MCF 10A (cell line): ENCODE measurements at regions of chr4 and their contacts with region 1.

Region 1: DNA sequence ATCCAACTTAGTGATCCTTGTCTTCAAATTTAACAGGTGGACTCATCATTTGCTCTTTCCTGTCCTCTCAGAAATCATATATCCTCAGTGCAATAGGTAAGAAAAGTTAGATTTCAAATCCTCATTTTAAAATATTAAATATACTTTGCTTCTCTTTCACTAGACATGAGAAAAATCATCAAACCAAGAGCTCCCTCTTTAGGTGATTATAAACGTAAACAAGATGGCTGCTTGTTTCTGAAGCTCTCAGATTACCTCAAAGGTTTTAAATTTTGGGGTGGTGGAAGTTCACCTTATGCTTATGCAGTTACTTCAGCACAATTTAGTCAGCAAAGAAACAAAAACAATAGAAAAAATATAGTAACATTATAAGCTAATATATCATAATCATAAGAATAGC is 27.3 kb downstream of the CSN3 start:
- DNase-seq: peak; percentile 22
- H3K4me3 Mint-ChIP-seq: no peak overlapping the region
- H3K27ac Mint-ChIP-seq: no peak overlapping the region
- H3K4me1 Mint-ChIP-seq: no peaks in the 10 kb centered on the region
- H3K27me3 Mint-ChIP-seq: peaks cover 14% of the 10 kb centered on the region
- CTCF ChIP-seq: peak; percentile 19

Region 2: GRCh38 chr4:69858690-69859089 is 411.0 kb before region 1 on chr4:
- CTCF ChIA-PET with region 1: no interaction called
- POLR2A ChIA-PET with region 1: no interaction called
- intact Hi-C with region 1: no loop called
- DNase-seq: peak; percentile 81
- H3K4me3 Mint-ChIP-seq: no peak overlapping the region
- H3K27ac Mint-ChIP-seq: no peak overlapping the region
- H3K4me1 Mint-ChIP-seq: no peaks in the 10 kb centered on the region
- H3K27me3 Mint-ChIP-seq: no peaks in the 10 kb centered on the region
- CTCF ChIP-seq: no peak

Region 3: GRCh38 chr4:69896530-69897116 is 373.1 kb before region 1 on chr4:
- CTCF ChIA-PET with region 1: interaction called, 4 read pairs
- POLR2A ChIA-PET with region 1: no interaction called
- intact Hi-C with region 1: loop called (anchors 2 kb)
- DNase-seq: peak; percentile 27
- H3K4me3 Mint-ChIP-seq: no peak overlapping the region
- H3K27ac Mint-ChIP-seq: no peak overlapping the region
- H3K4me1 Mint-ChIP-seq: no peaks in the 10 kb centered on the region
- H3K27me3 Mint-ChIP-seq: peaks cover 79% of the 10 kb centered on the region
- CTCF ChIP-seq: peak; percentile 58